Gastrocnemius medialis (tissue), 4 donors: ENCODE measurements at regions of chr2 and their contacts with region 1.

Region 1: DNA sequence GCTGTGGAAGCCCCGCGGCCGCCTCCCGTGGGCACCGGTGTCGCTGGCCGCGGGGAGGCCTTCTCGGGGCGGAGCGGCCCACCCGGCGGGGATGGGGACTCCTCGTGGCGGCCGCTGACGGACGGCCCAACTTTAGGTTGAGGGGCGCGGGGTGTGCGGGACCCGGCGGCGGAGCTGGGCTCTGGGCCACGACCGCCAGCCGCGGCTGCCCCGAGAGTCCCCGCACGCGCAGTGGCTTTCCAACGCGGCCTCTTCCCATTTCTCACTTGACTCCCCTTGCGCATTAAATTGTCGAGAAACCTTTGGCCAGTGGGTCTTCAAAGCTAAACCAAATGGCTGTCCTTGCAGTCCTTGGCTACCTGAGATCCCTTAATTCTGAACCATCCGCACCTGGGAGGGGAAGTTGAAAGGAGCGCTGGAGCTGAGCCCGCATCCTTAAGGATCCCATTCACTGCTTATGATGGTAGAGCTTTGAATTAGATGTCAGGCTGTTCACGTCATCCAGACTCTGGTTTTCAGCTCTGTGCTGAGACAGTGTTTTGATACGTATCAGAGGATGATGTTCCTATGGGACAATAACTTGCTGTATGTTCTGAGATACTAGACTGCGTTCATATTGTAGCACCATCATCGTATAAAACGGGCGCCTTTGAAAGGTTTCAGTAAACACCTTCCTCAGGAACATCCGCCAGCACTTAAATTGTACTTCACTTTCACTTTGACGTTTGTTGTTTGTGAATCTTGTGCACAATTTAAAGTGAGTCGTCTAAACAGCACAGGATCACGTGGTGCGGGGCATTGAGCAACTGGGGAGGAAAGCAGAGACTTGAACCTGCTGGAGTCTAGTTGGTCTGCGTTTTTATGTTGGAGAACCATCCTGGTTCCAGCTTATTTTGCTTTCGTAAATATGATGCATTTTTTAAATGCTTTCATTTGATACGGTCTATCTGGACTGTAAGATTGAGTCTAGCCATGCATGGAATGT is 874 bp downstream of the CLIP4 start:
- DNase-seq: peak; percentile 77 to 79
- ATAC-seq: peak; percentile 47 to 49
- H3K4me3 ChIP-seq: peak overlapping the region; percentile 63 to 75 (median 70)
- H3K27ac ChIP-seq: peak overlapping the region; percentile 85 to 94 (median 93)
- H3K4me1 ChIP-seq: peaks cover 42 to 58% of the 10 kb centered on the region in 2 donors
- H3K27me3 ChIP-seq: no peaks in the 10 kb centered on the region
- CTCF ChIP-seq: no peak
- POLR2A ChIP-seq: peak; percentile 51 to 69

Region 2: GRCh38 chr2:28958689-28959088 is 157.4 kb before region 1 on chr2:
- in situ Hi-C with region 1: no loop called
- intact Hi-C with region 1: loop called (anchors 2 kb)
- DNase-seq: peak; percentile 74 to 84
- ATAC-seq: peak; percentile 87 to 88
- H3K4me3 ChIP-seq: peak overlapping the region in 2 of 4 donors; percentile 2 to 6
- H3K27ac ChIP-seq: peak overlapping the region; percentile 67 to 86 (median 80)
- H3K4me1 ChIP-seq: peaks cover 6 to 10% of the 10 kb centered on the region in 2 donors
- H3K27me3 ChIP-seq: no peaks in the 10 kb centered on the region
- CTCF ChIP-seq: peak; percentile 75 to 86 (median 81)
- POLR2A ChIP-seq: peak; percentile 52 to 53

Region 3: GRCh38 chr2:29000481-29000880 is 115.6 kb before region 1 on chr2:
- in situ Hi-C with region 1: no loop called
- intact Hi-C with region 1: no loop called
- DNase-seq: peak in 1 of 2 donors; percentile 56
- ATAC-seq: peak in 1 of 2 donors; percentile 37
- H3K4me3 ChIP-seq: no peak overlapping the region
- H3K27ac ChIP-seq: no peak overlapping the region
- H3K4me1 ChIP-seq: no peaks in the 10 kb centered on the region
- H3K27me3 ChIP-seq: no peaks in the 10 kb centered on the region
- CTCF ChIP-seq: no peak
- POLR2A ChIP-seq: no peak

Region 4: DNA sequence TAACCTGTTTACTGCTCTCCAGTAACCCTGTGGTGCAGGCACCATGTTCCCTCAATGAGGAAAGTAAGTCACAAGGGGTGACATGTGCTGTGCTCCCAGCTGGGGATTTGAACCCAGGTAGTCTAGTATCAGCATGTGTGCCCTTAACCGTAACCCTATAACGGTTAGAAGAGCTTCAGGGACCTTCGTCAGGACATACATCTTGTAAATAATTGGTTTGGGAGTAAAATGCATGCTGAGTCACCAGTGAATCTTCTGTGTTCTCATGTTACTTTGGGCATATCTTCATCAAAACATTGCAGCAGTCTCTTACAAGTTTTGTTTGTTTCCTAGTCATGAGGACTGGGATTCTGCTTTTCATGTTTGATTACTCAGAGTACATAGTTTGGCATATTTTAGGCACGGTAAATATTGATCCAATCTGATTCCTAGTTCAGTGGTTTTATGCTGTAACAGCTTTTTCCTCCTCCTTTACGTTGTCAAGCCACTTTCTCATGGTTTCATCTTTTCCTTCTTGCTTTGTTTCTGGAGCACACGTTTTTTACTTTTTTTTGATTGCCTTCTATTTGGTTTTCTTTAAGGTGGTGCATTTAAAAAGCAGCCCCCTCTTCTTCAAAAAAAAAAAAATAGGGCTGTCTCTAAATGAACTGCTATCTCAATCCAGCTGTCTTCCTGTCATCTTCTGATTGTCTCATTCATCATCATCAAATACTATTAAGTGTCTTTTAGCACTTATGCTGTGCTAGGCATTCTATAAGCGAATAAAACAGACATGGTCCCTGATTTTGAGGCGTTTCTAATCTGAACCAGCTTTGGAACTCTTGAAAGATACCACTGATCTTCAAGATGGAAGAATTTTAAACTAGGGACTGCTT is 49.5 kb after region 1 on chr2:
- in situ Hi-C with region 1: no loop called
- intact Hi-C with region 1: loop called (anchors 2 kb)
- DNase-seq: peak in 1 of 2 donors; percentile 44
- ATAC-seq: peak; percentile 63 to 90
- H3K4me3 ChIP-seq: no peak overlapping the region
- H3K27ac ChIP-seq: peak overlapping the region; percentile 72 to 87 (median 80)
- H3K4me1 ChIP-seq: peaks cover 22 to 26% of the 10 kb centered on the region in 2 donors
- H3K27me3 ChIP-seq: no peaks in the 10 kb centered on the region
- CTCF ChIP-seq: no peak
- POLR2A ChIP-seq: no peak

Region 5: GRCh38 chr2:29174937-29175336 is 58.8 kb after region 1 on chr2:
- in situ Hi-C with region 1: no loop called
- intact Hi-C with region 1: loop called (anchors 5 kb)
- DNase-seq: peak; percentile 74 to 75
- ATAC-seq: peak; percentile 96 to 97
- H3K4me3 ChIP-seq: peak overlapping the region in 3 of 4 donors; percentile 38 to 50 (median 46)
- H3K27ac ChIP-seq: peak overlapping the region; percentile 74 to 82 (median 80)
- H3K4me1 ChIP-seq: peaks cover 7 to 13% of the 10 kb centered on the region in 2 donors
- H3K27me3 ChIP-seq: no peaks in the 10 kb centered on the region
- CTCF ChIP-seq: no peak
- POLR2A ChIP-seq: peak in 1 of 2 donors; percentile 79